ENCODE measurements at regions of chr10 and their contacts with region 1.

Region 1: GRCh38 chr10:12656518-12657142 is 307.3 kb downstream of the CAMK1D start:
- DNase-seq: peak in 2 of 9 experiments; percentile 59 to 71
- ATAC-seq: peak; percentile 81
- H3K4me3 ChIP-seq: no peak overlapping the region
- H3K4me3 Mint-ChIP-seq: peak overlapping the region; percentile 29
- H3K27ac ChIP-seq: no peak overlapping the region
- H3K27ac Mint-ChIP-seq: no peak overlapping the region
- H3K4me1 ChIP-seq: no peaks in the 10 kb centered on the region
- H3K4me1 Mint-ChIP-seq: peaks cover 8% of the 10 kb centered on the region
- H3K27me3 ChIP-seq: no peaks in the 10 kb centered on the region
- H3K27me3 Mint-ChIP-seq: no peaks in the 10 kb centered on the region
- CTCF ChIP-seq: peak; percentile 72

Region 2: GRCh38 chr10:12214763-12215218 is 441.8 kb before region 1 on chr10:
- CTCF ChIA-PET with region 1: interaction called, 17 read pairs
- POLR2A ChIA-PET with region 1: no interaction called
- intact Hi-C with region 1: loop called (anchors 1 kb)
- DNase-seq: peak in 6 of 9 experiments; percentile 10 to 75 (median 52)
- ATAC-seq: peak; percentile 44
- H3K4me3 ChIP-seq: peak overlapping the region in 1 of 2 experiments; percentile 24
- H3K4me3 Mint-ChIP-seq: peak overlapping the region; percentile 69
- H3K27ac ChIP-seq: peak overlapping the region in 1 of 2 experiments; percentile 51
- H3K27ac Mint-ChIP-seq: peak overlapping the region; percentile 87
- H3K4me1 ChIP-seq: peaks cover 5% of the 10 kb centered on the region
- H3K4me1 Mint-ChIP-seq: peaks cover 17% of the 10 kb centered on the region
- H3K27me3 ChIP-seq: no peaks in the 10 kb centered on the region
- H3K27me3 Mint-ChIP-seq: no peaks in the 10 kb centered on the region
- CTCF ChIP-seq: peak; percentile 73

Region 3: DNA sequence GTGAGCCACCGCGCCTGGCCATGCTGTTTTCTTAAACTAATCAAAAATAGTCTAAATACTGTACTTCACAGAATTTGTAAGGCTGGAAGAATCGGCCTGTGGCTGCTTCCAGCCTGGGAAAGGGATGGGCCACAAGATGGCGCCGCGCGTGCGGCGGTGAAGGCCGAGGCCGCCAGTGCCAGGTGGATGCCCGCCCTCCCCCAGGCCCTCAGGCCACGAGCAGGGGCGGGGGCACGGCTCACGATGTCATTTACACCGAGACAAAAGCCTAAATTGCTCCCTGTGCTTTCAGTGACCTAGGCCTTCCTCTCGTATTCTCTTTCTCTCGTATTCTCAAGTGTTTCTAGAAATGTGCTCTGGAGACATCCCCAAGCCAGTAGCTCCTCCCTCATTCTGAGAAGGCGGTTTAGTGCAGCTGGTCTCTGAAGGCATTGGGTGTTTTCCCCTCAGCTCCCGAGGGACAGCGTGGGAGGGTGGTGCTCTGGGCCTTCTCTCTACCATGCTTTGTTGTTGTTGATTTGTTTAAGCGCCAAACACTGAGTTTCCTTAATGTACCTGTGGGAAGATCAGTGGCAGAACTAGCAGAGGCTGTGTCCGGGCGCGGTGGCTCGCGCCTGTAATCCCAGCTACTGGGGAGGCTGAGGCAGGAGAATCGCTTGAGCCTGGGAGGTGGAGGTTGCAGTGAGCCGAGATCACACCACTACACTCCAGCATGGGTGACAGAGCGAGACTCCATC is 392.3 kb before region 1 on chr10:
- CTCF ChIA-PET with region 1: interaction called, 114 read pairs
- POLR2A ChIA-PET with region 1: interaction called, 4 read pairs
- intact Hi-C with region 1: loop called (anchors 1 kb)
- DNase-seq: peak; percentile 30 to 83 (median 67)
- ATAC-seq: peak; percentile 76
- H3K4me3 ChIP-seq: peak overlapping the region; percentile 35 to 36
- H3K4me3 Mint-ChIP-seq: peak overlapping the region; percentile 72
- H3K27ac ChIP-seq: no peak overlapping the region
- H3K27ac Mint-ChIP-seq: peak overlapping the region; percentile 64
- H3K4me1 ChIP-seq: no peaks in the 10 kb centered on the region
- H3K4me1 Mint-ChIP-seq: peaks cover 14% of the 10 kb centered on the region
- H3K27me3 ChIP-seq: no peaks in the 10 kb centered on the region
- H3K27me3 Mint-ChIP-seq: no peaks in the 10 kb centered on the region
- CTCF ChIP-seq: peak; percentile 70

Region 4: DNA sequence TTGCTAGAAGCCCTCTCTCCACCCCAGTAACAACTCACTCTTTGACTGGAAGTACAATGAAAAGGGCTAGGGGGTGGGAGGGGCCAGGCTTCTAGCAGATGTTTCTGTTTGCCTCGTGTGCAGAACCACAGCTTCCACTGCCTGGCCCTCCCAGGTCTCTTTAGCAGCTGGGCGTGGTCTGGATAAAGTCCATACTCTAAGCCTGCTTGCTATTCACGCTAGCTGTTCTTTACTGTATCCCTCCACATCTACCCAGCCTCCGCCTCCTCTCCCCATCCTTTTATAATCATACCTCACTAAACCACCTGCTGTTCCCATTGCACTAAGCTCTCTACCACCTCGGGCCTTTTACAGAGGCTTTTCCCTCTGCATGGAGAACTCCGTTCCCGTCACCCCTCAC is 18.5 kb before region 1 on chr10:
- CTCF ChIA-PET with region 1: interaction called, 11 read pairs
- POLR2A ChIA-PET with region 1: no interaction called
- intact Hi-C with region 1: no loop called
- DNase-seq: no peak
- ATAC-seq: no peak
- H3K4me3 ChIP-seq: no peak overlapping the region
- H3K4me3 Mint-ChIP-seq: no peak overlapping the region
- H3K27ac ChIP-seq: no peak overlapping the region
- H3K27ac Mint-ChIP-seq: no peak overlapping the region
- H3K4me1 ChIP-seq: peaks cover 6% of the 10 kb centered on the region
- H3K4me1 Mint-ChIP-seq: peaks cover 25% of the 10 kb centered on the region
- H3K27me3 ChIP-seq: no peaks in the 10 kb centered on the region
- H3K27me3 Mint-ChIP-seq: no peaks in the 10 kb centered on the region
- CTCF ChIP-seq: no peak

Region 5: DNA sequence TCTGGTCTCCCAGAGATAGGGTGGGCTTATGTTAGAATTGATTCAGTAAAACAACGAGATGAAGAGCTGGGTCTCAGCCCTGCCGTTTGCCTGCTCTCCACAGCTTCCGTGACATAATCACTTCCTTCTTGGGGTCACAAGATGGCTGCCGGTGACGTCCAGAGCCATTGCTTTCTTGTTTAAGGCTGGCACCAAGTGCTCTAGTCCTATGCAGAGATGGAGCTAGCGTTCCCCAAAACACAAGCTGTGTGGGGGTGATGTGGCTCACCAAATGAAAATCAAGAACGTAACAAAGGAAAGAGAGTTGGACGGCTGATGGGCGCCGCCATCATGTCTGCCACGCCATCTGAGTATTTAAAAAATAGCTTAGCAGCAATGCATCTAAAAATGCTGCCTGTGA is 11.2 kb before region 1 on chr10:
- CTCF ChIA-PET with region 1: interaction called, 11 read pairs
- POLR2A ChIA-PET with region 1: interaction called, 6 read pairs
- intact Hi-C with region 1: no loop called
- DNase-seq: no peak
- ATAC-seq: no peak
- H3K4me3 ChIP-seq: no peak overlapping the region
- H3K4me3 Mint-ChIP-seq: no peak overlapping the region
- H3K27ac ChIP-seq: no peak overlapping the region
- H3K27ac Mint-ChIP-seq: no peak overlapping the region
- H3K4me1 ChIP-seq: no peaks in the 10 kb centered on the region
- H3K4me1 Mint-ChIP-seq: no peaks in the 10 kb centered on the region
- H3K27me3 ChIP-seq: no peaks in the 10 kb centered on the region
- H3K27me3 Mint-ChIP-seq: no peaks in the 10 kb centered on the region
- CTCF ChIP-seq: no peak

Region 6: GRCh38 chr10:12670004-12670403 is 13.4 kb after region 1 on chr10:
- CTCF ChIA-PET with region 1: interaction called, 10 read pairs
- POLR2A ChIA-PET with region 1: no interaction called
- intact Hi-C with region 1: no loop called
- DNase-seq: no peak
- ATAC-seq: no peak
- H3K4me3 ChIP-seq: no peak overlapping the region
- H3K4me3 Mint-ChIP-seq: no peak overlapping the region
- H3K27ac ChIP-seq: no peak overlapping the region
- H3K27ac Mint-ChIP-seq: no peak overlapping the region
- H3K4me1 ChIP-seq: no peaks in the 10 kb centered on the region
- H3K4me1 Mint-ChIP-seq: no peaks in the 10 kb centered on the region
- H3K27me3 ChIP-seq: no peaks in the 10 kb centered on the region
- H3K27me3 Mint-ChIP-seq: no peaks in the 10 kb centered on the region
- CTCF ChIP-seq: no peak

Region 7: GRCh38 chr10:12710594-12711349 is 54.1 kb after region 1 on chr10:
- CTCF ChIA-PET with region 1: interaction called, 37 read pairs
- POLR2A ChIA-PET with region 1: no interaction called
- intact Hi-C with region 1: loop called (anchors 1 to 2 kb)
- DNase-seq: peak; percentile 56 to 83 (median 73)
- ATAC-seq: peak; percentile 93
- H3K4me3 ChIP-seq: no peak overlapping the region
- H3K4me3 Mint-ChIP-seq: no peak overlapping the region
- H3K27ac ChIP-seq: no peak overlapping the region
- H3K27ac Mint-ChIP-seq: no peak overlapping the region
- H3K4me1 ChIP-seq: no peaks in the 10 kb centered on the region
- H3K4me1 Mint-ChIP-seq: peaks cover 4% of the 10 kb centered on the region
- H3K27me3 ChIP-seq: no peaks in the 10 kb centered on the region
- H3K27me3 Mint-ChIP-seq: no peaks in the 10 kb centered on the region
- CTCF ChIP-seq: peak; percentile 90

Region 8: DNA sequence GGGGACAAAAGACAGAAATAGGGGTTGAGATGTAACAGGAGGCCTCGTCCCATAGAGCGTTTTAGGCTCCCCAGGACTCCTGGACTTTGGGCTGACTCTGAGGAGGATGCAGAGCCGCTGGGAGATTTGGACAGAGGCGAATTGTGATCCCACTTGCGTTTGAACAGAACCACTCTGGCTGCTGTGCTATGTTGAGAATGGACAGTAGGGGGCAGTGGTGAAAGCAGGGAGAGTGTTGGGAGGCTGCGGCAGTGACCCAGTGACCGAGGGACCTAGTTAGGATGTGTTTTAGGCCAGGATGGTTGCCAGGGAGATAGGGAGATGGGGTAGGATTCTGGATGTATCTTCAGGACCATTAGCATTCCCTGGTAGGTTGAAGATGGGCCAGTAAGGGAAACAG is 73.3 kb after region 1 on chr10:
- CTCF ChIA-PET with region 1: no interaction called
- POLR2A ChIA-PET with region 1: no interaction called
- intact Hi-C with region 1: no loop called
- DNase-seq: no peak
- ATAC-seq: no peak
- H3K4me3 ChIP-seq: no peak overlapping the region
- H3K4me3 Mint-ChIP-seq: no peak overlapping the region
- H3K27ac ChIP-seq: no peak overlapping the region
- H3K27ac Mint-ChIP-seq: no peak overlapping the region
- H3K4me1 ChIP-seq: no peaks in the 10 kb centered on the region
- H3K4me1 Mint-ChIP-seq: peaks cover 5% of the 10 kb centered on the region
- H3K27me3 ChIP-seq: no peaks in the 10 kb centered on the region
- H3K27me3 Mint-ChIP-seq: no peaks in the 10 kb centered on the region
- CTCF ChIP-seq: no peak

Measured in CD8-positive, alpha-beta T cell (primary cell).